CD8-positive, alpha-beta T cell (primary cell): ENCODE measurements at regions of chr11 and their contacts with region 1.

Region 1: DNA sequence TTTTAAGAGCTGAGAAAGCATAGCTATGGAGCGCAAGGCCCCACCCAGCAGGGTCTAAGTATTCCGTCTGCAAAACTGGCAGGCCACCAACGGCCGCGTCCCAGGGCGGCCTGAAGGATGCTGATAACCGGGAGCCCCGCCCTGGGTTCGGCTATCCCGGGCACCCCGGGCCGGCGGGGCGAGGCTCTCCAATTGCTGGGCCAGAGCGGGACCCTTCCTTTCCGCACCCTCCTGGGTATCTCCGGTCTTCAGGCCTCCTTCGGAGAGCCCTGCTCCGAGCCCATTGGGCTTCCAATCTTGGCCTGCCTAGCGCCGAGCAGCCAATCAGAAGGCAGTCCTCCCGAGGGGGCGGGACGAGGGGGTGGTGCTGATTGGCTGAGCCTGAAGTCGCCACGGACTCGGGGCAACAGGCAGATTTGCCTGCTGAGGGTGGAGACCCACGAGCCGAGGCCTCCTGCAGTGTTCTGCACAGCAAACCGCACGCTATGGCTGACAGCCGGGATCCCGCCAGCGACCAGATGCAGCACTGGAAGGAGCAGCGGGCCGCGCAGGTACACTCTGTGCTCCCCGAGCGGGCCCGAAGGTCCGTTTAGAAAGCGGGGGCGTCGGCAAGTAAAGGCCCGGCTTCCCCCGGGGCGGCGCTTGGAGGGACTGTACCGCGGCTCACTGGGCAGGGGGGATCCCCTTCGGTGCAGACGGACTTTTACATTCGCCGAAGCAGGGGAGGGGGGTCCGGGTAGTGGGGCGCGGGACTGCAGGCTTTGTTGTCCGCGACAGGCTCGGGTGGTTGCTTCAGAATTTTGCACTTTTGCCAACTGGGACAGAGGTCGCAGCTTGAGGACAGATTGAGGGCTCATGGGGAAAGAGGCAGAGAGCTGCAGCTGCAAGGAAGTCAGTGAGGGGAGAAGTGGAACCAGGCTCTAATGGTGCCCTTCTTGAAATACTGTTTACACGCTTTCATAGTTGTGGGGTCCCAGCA is at the start of gene CAT:
- DNase-seq: peak; percentile 96 to 98 (median 97)
- ATAC-seq: peak; percentile 94
- H3K4me3 ChIP-seq: peak within 1 kb of the TSS; percentile 97 to 98
- H3K4me3 Mint-ChIP-seq: peak within 1 kb of the TSS; percentile 94
- H3K27ac ChIP-seq: peak within 1 kb of the TSS; percentile 80 to 81
- H3K27ac Mint-ChIP-seq: peak within 1 kb of the TSS; percentile 96
- H3K4me1 ChIP-seq: peaks cover 18% of the 10 kb centered on the region
- H3K4me1 Mint-ChIP-seq: peaks cover 49% of the 10 kb centered on the region
- H3K27me3 ChIP-seq: no peaks in the 10 kb centered on the region
- H3K27me3 Mint-ChIP-seq: no peaks in the 10 kb centered on the region
- CTCF ChIP-seq: no peak
- total RNA-seq, gene CAT: 8.2 to 8.7 TPM

Region 2: DNA sequence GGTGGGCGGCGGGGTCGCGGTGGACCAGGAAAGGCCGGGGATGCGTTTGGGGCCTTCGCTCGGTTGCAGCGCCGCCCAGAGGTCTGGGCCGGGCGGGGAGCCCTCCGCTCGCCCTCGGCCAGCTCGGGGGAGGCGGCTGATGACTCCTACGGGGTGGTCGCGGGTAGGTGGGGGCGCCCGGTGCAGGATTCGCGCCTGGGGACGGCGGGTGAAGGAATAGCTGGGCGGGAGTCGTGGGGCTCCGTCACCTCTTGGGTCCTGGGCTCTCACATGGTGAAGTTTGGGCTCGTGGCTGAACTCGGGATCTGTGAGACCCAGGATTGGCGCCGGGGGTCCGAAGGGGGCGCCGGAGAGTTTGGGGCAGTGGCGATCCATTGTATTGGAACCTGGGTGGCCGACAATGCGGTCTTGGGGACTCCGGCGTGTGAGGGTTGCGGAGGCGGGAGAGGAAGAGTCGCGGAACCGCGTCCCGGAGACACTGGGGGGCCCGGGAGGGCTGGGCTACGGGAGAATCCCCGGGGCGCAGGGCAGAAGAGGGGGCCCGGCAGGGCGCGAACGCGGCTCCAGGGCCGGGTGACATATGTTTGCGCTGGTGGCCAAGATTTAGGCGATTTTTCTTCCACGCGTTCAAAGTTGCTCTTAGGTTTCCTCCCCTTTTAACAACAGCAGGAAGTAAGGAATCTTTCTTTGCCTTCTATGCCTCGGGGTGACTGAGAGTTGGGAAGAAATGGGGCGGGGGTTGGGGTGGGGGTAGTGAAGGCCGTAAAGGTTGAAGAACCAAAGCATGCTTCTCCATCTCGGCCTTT is 1545.3 kb before region 1 on chr11:
- CTCF ChIA-PET with region 1: no interaction called
- POLR2A ChIA-PET with region 1: no interaction called
- intact Hi-C with region 1: loop called in 1 of 2 experiments (anchors 2 kb)
- DNase-seq: peak in 8 of 9 experiments; percentile 21 to 75 (median 54)
- ATAC-seq: peak; percentile 50
- H3K4me3 ChIP-seq: peak overlapping the region; percentile 79 to 87
- H3K4me3 Mint-ChIP-seq: peak overlapping the region; percentile 92
- H3K27ac ChIP-seq: peak overlapping the region; percentile 36 to 51
- H3K27ac Mint-ChIP-seq: peak overlapping the region; percentile 74
- H3K4me1 ChIP-seq: peaks cover 27% of the 10 kb centered on the region
- H3K4me1 Mint-ChIP-seq: peaks cover 33% of the 10 kb centered on the region
- H3K27me3 ChIP-seq: no peaks in the 10 kb centered on the region
- H3K27me3 Mint-ChIP-seq: no peaks in the 10 kb centered on the region
- CTCF ChIP-seq: peak; percentile 35

Region 3: GRCh38 chr11:33700425-33701271 is 738.2 kb before region 1 on chr11 and contains the start of gene C11orf91:
- CTCF ChIA-PET with region 1: no interaction called
- POLR2A ChIA-PET with region 1: no interaction called
- intact Hi-C with region 1: loop called in 1 of 2 experiments (anchors 2 kb)
- DNase-seq: peak; percentile 88 to 96 (median 94)
- ATAC-seq: peak; percentile 95
- H3K4me3 ChIP-seq: peak within 1 kb of the TSS; percentile 51 to 68
- H3K4me3 Mint-ChIP-seq: peak within 1 kb of the TSS; percentile 92
- H3K27ac ChIP-seq: no peak within 1 kb of the TSS
- H3K27ac Mint-ChIP-seq: peak within 1 kb of the TSS; percentile 64
- H3K4me1 ChIP-seq: peaks cover 13% of the 10 kb centered on the region
- H3K4me1 Mint-ChIP-seq: peaks cover 25% of the 10 kb centered on the region
- H3K27me3 ChIP-seq: no peaks in the 10 kb centered on the region
- H3K27me3 Mint-ChIP-seq: peaks cover 2% of the 10 kb centered on the region
- CTCF ChIP-seq: no peak
- total RNA-seq, gene C11orf91: 0.54 TPM in 1 of 2 experiments, not detected in the other

Region 4: DNA sequence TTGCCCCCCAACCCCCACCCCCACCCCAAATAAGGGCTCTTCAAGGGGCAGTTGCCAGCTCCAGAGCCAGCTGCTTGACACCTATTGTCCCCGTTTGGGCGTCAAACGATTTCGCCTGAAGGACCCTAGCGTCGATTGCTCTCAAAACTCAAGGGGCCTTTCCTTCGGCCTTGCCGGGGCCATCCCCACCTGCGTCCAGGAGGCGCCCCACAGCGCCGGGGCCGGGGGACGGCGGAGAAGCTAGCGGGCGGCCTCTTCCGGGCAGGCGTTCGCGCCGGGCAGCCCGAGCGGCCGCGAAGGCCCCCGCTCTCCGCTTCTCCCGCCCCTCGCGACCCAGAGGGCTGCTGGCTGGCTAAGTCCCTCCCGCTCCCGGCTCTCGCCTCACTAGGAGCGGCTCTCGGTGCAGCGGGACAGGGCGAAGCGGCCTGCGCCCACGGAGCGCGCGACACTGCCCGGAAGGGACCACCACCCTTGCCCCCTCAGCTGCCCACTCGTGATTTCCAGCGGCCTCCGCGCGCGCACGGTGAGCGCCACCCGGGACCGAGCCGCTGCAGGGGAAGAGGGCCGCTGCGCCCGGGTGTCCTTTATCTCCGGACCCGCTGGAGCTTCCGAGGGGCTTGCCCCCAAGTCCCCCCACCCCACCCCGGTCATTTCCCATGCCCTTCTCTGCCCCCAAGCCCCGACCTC is 387.3 kb before region 1 on chr11 and contains the start of gene CAPRIN1:
- CTCF ChIA-PET with region 1: no interaction called
- POLR2A ChIA-PET with region 1: no interaction called
- intact Hi-C with region 1: loop called (anchors 1 to 5 kb)
- DNase-seq: peak; percentile 71 to 93 (median 83)
- ATAC-seq: peak; percentile 70
- H3K4me3 ChIP-seq: peak within 1 kb of the TSS; percentile 79 to 85
- H3K4me3 Mint-ChIP-seq: peak within 1 kb of the TSS; percentile 98
- H3K27ac ChIP-seq: peak within 1 kb of the TSS; percentile 98 to 99
- H3K27ac Mint-ChIP-seq: peak within 1 kb of the TSS; percentile 96
- H3K4me1 ChIP-seq: peaks cover 35% of the 10 kb centered on the region
- H3K4me1 Mint-ChIP-seq: peaks cover 29% of the 10 kb centered on the region
- H3K27me3 ChIP-seq: no peaks in the 10 kb centered on the region
- H3K27me3 Mint-ChIP-seq: peaks cover 3% of the 10 kb centered on the region
- CTCF ChIP-seq: no peak
- total RNA-seq, gene CAPRIN1: 92.8 to 102 TPM

Region 5: DNA sequence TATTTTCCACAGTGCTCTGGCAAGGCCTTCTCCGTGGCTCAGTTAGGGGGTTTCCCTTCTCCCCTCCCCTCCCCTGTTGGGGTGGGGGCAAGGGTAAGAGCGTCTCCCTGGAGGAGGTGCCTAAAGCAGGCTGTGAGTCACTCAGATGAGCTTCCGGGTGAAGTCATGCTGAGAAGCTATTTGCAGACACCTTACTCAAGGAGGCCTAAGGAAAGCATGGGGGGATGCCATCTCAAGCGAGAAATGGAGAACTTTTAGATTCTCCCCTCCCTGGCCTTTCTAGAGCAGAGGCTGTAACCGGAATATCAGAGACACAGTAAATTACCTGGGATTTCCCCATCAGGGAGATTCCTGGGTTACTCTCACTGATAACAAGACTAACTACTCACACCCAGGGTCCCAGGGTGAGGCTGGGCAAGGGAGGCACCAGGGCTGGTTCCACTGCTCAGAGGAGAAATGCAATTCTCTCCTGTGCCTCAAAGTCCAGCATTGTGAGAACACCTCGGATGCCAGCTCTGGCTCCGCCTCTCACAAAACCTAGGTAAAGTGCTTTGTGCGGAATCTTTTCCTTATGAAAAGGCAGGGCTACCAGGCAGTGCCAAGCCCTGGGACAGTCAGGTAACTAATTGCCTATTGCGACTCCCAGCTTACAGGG is 204.6 kb before region 1 on chr11:
- CTCF ChIA-PET with region 1: no interaction called
- POLR2A ChIA-PET with region 1: no interaction called
- intact Hi-C with region 1: loop called in 1 of 2 experiments (anchors 10 kb)
- DNase-seq: peak; percentile 30 to 91 (median 74)
- ATAC-seq: peak; percentile 99
- H3K4me3 ChIP-seq: no peak overlapping the region
- H3K4me3 Mint-ChIP-seq: no peak overlapping the region
- H3K27ac ChIP-seq: no peak overlapping the region
- H3K27ac Mint-ChIP-seq: peak overlapping the region; percentile 60
- H3K4me1 ChIP-seq: peaks cover 9% of the 10 kb centered on the region
- H3K4me1 Mint-ChIP-seq: peaks cover 16% of the 10 kb centered on the region
- H3K27me3 ChIP-seq: no peaks in the 10 kb centered on the region
- H3K27me3 Mint-ChIP-seq: no peaks in the 10 kb centered on the region
- CTCF ChIP-seq: no peak

Region 6: DNA sequence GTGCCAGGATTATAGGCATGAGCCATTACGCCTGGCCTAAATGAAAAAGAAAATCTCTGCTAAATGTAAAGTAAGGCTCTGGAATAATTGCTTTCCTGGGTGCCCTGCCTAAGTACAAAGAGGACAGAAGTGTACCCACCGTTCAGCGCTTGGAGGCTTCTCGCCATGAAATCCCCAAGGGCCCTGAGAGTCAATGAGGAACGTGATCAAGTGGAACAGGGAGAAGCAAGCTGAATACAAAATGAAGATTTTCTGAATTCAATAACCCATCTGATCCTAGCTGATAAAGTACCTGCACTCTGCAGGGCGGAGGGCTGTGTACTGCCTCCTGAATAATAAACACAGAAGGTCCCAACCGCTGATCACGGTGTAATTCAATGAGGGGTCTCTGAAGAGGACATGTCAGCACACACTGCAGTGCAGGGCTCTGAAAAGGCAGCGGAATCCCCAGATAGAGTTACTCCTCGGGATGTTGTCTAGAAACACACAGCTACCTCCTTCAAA is 178.7 kb before region 1 on chr11:
- CTCF ChIA-PET with region 1: no interaction called
- POLR2A ChIA-PET with region 1: no interaction called
- intact Hi-C with region 1: no loop called
- DNase-seq: no peak
- ATAC-seq: no peak
- H3K4me3 ChIP-seq: no peak overlapping the region
- H3K4me3 Mint-ChIP-seq: no peak overlapping the region
- H3K27ac ChIP-seq: no peak overlapping the region
- H3K27ac Mint-ChIP-seq: no peak overlapping the region
- H3K4me1 ChIP-seq: no peaks in the 10 kb centered on the region
- H3K4me1 Mint-ChIP-seq: no peaks in the 10 kb centered on the region
- H3K27me3 ChIP-seq: no peaks in the 10 kb centered on the region
- H3K27me3 Mint-ChIP-seq: peaks cover 2% of the 10 kb centered on the region
- CTCF ChIP-seq: no peak

Region 7: GRCh38 chr11:34916015-34916842 is 477.4 kb after region 1 on chr11 and contains the starts of genes APIP and PDHX:
- CTCF ChIA-PET with region 1: no interaction called
- POLR2A ChIA-PET with region 1: no interaction called
- intact Hi-C with region 1: loop called (anchors 1 to 2 kb)
- DNase-seq: peak; percentile 86 to 96 (median 94)
- ATAC-seq: peak; percentile 89
- H3K4me3 ChIP-seq: peak within 1 kb of the TSS; percentile 70 to 94
- H3K4me3 Mint-ChIP-seq: peak within 1 kb of the TSS; percentile 96
- H3K27ac ChIP-seq: peak within 1 kb of the TSS; percentile 57 to 72
- H3K27ac Mint-ChIP-seq: peak within 1 kb of the TSS; percentile 97
- H3K4me1 ChIP-seq: peaks cover 18% of the 10 kb centered on the region
- H3K4me1 Mint-ChIP-seq: peaks cover 53% of the 10 kb centered on the region
- H3K27me3 ChIP-seq: no peaks in the 10 kb centered on the region
- H3K27me3 Mint-ChIP-seq: no peaks in the 10 kb centered on the region
- CTCF ChIP-seq: no peak
- total RNA-seq, gene APIP: 5.4 to 6.4 TPM
- total RNA-seq, gene PDHX: 20.3 to 21.4 TPM